ENCODE measurements at regions of chr4 and their contacts with region 1.

Region 1: DNA sequence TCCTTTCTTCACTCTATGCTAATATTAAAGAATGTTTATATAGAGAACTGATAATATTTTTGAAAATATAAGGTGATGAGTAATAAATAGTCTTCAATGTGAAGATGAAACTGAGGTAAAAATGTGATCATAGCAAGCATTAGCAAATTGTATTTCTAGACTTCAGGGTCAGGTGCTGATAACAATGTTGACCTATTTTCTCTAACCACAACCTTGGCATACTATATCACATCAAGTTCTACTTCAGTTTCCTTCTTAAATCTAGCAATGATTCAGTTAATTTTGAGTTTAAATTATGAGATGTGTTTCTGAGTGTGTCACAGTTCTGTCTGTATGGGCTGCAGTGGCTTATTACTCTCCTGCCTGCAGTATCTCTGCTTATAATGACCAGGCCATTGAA is 209.4 kb downstream of the RAPGEF2 start:
- DNase-seq: no peak
- H3K4me3 ChIP-seq: no peak overlapping the region
- H3K27ac ChIP-seq: no peak overlapping the region
- H3K4me1 ChIP-seq: peaks cover 19% of the 10 kb centered on the region
- H3K27me3 ChIP-seq: no peaks in the 10 kb centered on the region
- CTCF ChIP-seq: no peak

Region 2: DNA sequence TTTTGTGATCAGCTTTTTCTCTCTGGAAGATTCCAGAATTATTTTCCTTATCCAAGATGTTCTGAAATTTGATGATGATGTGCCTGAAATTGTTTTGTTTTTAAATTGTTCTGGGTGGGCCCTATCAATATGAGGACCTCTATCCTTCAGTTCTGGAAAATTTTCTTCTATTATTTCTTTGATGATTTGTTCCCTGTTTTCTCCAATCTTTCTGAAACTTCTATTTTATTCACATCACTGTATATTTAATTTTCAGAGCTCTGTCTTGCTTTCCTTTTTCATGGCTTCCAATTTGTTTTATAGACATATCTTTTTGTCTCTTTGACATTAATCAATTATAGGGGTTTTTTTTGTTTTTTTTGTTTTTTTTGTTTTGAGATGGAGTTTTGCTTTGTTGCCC is 555.6 kb before region 1 on chr4:
- CTCF ChIA-PET with region 1: interaction called, 10 read pairs
- dilution Hi-C with region 1: no loop called
- in situ Hi-C with region 1: no loop called
- intact Hi-C with region 1: no loop called
- DNase-seq: no peak
- H3K4me3 ChIP-seq: no peak overlapping the region
- H3K27ac ChIP-seq: no peak overlapping the region
- H3K4me1 ChIP-seq: no peaks in the 10 kb centered on the region
- H3K27me3 ChIP-seq: no peaks in the 10 kb centered on the region
- CTCF ChIP-seq: no peak

Region 3: GRCh38 chr4:158856852-158857251 is 455.4 kb before region 1 on chr4:
- CTCF ChIA-PET with region 1: no interaction called
- dilution Hi-C with region 1: no loop called
- in situ Hi-C with region 1: no loop called
- intact Hi-C with region 1: loop called (anchors 5 kb)
- DNase-seq: peak; percentile 25
- H3K4me3 ChIP-seq: no peak overlapping the region
- H3K27ac ChIP-seq: no peak overlapping the region
- H3K4me1 ChIP-seq: no peaks in the 10 kb centered on the region
- H3K27me3 ChIP-seq: no peaks in the 10 kb centered on the region
- CTCF ChIP-seq: peak; percentile 44 to 63

Region 4: GRCh38 chr4:159191989-159192388 is 120.2 kb before region 1 on chr4:
- CTCF ChIA-PET with region 1: no interaction called
- dilution Hi-C with region 1: no loop called
- in situ Hi-C with region 1: no loop called
- intact Hi-C with region 1: no loop called
- DNase-seq: peak; percentile 53
- H3K4me3 ChIP-seq: no peak overlapping the region
- H3K27ac ChIP-seq: no peak overlapping the region
- H3K4me1 ChIP-seq: peaks cover 4% of the 10 kb centered on the region
- H3K27me3 ChIP-seq: no peaks in the 10 kb centered on the region
- CTCF ChIP-seq: peak; percentile 56 to 75

Region 5: GRCh38 chr4:159206427-159206871 is 105.8 kb before region 1 on chr4:
- CTCF ChIA-PET with region 1: no interaction called
- dilution Hi-C with region 1: no loop called
- in situ Hi-C with region 1: no loop called
- intact Hi-C with region 1: loop called (anchors 2 kb)
- DNase-seq: peak; percentile 60
- H3K4me3 ChIP-seq: peak overlapping the region in 1 of 3 experiments; percentile 20
- H3K27ac ChIP-seq: peak overlapping the region; percentile 20
- H3K4me1 ChIP-seq: peaks cover 7% of the 10 kb centered on the region
- H3K27me3 ChIP-seq: no peaks in the 10 kb centered on the region
- CTCF ChIP-seq: no peak

Region 6: GRCh38 chr4:159227984-159228383 is 84.3 kb before region 1 on chr4:
- CTCF ChIA-PET with region 1: no interaction called
- dilution Hi-C with region 1: no loop called
- in situ Hi-C with region 1: no loop called
- intact Hi-C with region 1: loop called (anchors 1 kb)
- DNase-seq: peak; percentile 70
- H3K4me3 ChIP-seq: peak overlapping the region; percentile 34 to 82 (median 60)
- H3K27ac ChIP-seq: peak overlapping the region; percentile 94
- H3K4me1 ChIP-seq: peaks cover 22% of the 10 kb centered on the region
- H3K27me3 ChIP-seq: no peaks in the 10 kb centered on the region
- CTCF ChIP-seq: peak in 1 of 2 donors; percentile 35

Region 7: GRCh38 chr4:159516556-159517140 is 204.4 kb after region 1 on chr4:
- CTCF ChIA-PET with region 1: no interaction called
- dilution Hi-C with region 1: no loop called
- in situ Hi-C with region 1: no loop called
- intact Hi-C with region 1: no loop called
- DNase-seq: peak; percentile 57
- H3K4me3 ChIP-seq: no peak overlapping the region
- H3K27ac ChIP-seq: no peak overlapping the region
- H3K4me1 ChIP-seq: no peaks in the 10 kb centered on the region
- H3K27me3 ChIP-seq: no peaks in the 10 kb centered on the region
- CTCF ChIP-seq: no peak